Endothelial cell of umbilical vein (primary cell): ENCODE measurements at regions of chr7 and their contacts with region 1.

Region 1: DNA sequence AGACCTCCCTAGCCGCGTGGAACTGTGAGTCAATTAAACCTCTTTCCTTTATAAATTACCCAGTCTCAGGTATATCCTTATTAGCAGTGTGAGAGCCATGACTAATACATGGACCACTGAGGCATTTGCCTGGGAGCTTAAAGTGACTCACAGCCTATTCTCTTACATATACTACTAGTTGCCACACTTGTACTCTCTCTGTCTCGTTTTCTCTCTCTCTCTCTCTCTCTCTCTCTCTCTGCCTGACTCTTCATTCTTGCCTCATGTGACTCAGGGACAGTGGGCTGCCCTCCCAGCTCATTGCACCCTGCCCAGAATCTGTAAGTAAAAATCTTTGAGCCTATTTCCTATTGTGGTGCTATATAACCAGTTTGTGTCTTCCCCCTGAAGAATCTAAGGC is 238.5 kb upstream of the MAGI2 start:
- DNase-seq: no peak
- H3K4me3 ChIP-seq: no peak overlapping the region
- H3K27ac ChIP-seq: no peak overlapping the region
- H3K4me1 ChIP-seq: no peaks in the 10 kb centered on the region
- H3K27me3 ChIP-seq: no peaks in the 10 kb centered on the region
- CTCF ChIP-seq: no peak
- POLR2A ChIP-seq: no peak

Region 2: DNA sequence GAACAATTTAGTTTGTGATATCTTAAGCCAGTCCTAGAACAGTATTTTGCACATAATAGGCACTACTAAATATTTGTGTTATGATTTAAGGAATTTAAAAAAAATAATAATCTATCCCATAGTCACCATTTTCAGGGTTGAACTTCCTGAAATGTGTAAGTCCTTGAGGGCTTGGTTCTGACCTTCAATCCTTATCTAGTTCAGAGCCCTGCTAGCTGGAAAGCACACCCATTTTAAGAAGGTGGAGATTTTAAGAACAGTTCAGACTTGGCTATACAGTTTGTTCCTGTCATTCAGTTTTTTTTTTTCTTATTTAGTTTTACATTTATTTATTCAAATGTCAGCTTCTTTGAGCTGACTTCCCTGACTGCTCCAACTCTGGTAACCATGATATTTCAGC is 55.2 kb before region 1 on chr7:
- CTCF ChIA-PET with region 1: no interaction called
- POLR2A ChIA-PET with region 1: no interaction called
- dilution Hi-C with region 1: no loop called
- intact Hi-C with region 1: loop called (anchors 10 kb)
- DNase-seq: no peak
- H3K4me3 ChIP-seq: no peak overlapping the region
- H3K27ac ChIP-seq: no peak overlapping the region
- H3K4me1 ChIP-seq: no peaks in the 10 kb centered on the region
- H3K27me3 ChIP-seq: no peaks in the 10 kb centered on the region
- CTCF ChIP-seq: no peak
- POLR2A ChIP-seq: no peak

Region 3: GRCh38 chr7:79709574-79710409 is 17.8 kb after region 1 on chr7:
- CTCF ChIA-PET with region 1: no interaction called
- POLR2A ChIA-PET with region 1: interaction called, 12 read pairs
- dilution Hi-C with region 1: no loop called
- intact Hi-C with region 1: no loop called
- DNase-seq: peak; percentile 40
- H3K4me3 ChIP-seq: no peak overlapping the region
- H3K27ac ChIP-seq: no peak overlapping the region
- H3K4me1 ChIP-seq: peaks cover 3% of the 10 kb centered on the region
- H3K27me3 ChIP-seq: no peaks in the 10 kb centered on the region
- CTCF ChIP-seq: no peak
- POLR2A ChIP-seq: no peak